Activated B cell treated with CpG ODN at 0.5 μM for 24 hours (primary cell): ENCODE measurements at regions of chr20 and their contacts with region 1.

Region 1: GRCh38 chr20:43955062-43955749 is 40.6 kb downstream of the TOX2 start:
- DNase-seq: peak; percentile 33
- ATAC-seq: peak; percentile 81
- H3K4me3 Mint-ChIP-seq: no peak overlapping the region
- H3K27ac Mint-ChIP-seq: peak overlapping the region; percentile 69
- H3K4me1 Mint-ChIP-seq: peaks cover 41% of the 10 kb centered on the region
- H3K27me3 Mint-ChIP-seq: no peaks in the 10 kb centered on the region
- CTCF ChIP-seq: no peak

Region 2: GRCh38 chr20:43840382-43841070 is 114.7 kb before region 1 on chr20:
- CTCF ChIA-PET with region 1: no interaction called
- POLR2A ChIA-PET with region 1: no interaction called
- intact Hi-C with region 1: loop called (anchors 5 kb)
- DNase-seq: no peak
- ATAC-seq: peak; percentile 82
- H3K4me3 Mint-ChIP-seq: no peak overlapping the region
- H3K27ac Mint-ChIP-seq: no peak overlapping the region
- H3K4me1 Mint-ChIP-seq: peaks cover 6% of the 10 kb centered on the region
- H3K27me3 Mint-ChIP-seq: no peaks in the 10 kb centered on the region
- CTCF ChIP-seq: no peak

Region 3: DNA sequence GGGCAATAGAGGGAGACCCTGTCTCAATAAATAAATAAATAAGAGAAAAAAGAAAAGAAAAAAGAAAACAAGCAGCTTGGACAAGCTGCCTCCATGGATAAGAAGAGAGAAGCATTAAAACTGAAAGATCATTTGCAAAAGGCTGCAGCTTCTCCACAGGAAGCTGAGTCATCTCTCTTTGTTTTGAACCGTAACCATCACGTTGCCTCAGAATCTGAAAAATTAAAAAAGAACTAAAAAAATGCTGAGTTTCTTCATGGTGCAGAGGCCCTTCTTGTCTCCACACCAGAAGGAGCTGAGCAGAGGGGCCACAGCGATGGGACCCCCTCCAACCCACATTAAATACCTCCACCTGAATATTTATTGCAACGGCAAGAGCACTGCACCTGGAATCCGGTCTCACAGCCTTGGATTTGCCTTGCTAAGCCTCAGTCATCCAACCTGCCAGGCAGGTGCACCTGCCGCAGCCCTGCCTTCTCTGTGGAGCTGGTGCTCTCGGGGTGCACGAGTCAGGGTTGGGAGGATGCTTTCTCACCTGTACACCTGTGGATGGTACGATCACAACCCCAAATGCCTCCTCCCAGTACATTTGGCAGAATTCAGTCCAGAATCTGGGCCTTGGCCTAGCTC is 12.4 kb before region 1 on chr20:
- CTCF ChIA-PET with region 1: no interaction called
- POLR2A ChIA-PET with region 1: interaction called, 9 read pairs
- intact Hi-C with region 1: loop called (anchors 1 kb)
- DNase-seq: no peak
- ATAC-seq: peak; percentile 63
- H3K4me3 Mint-ChIP-seq: peak overlapping the region; percentile 33
- H3K27ac Mint-ChIP-seq: peak overlapping the region; percentile 84
- H3K4me1 Mint-ChIP-seq: peaks cover 23% of the 10 kb centered on the region
- H3K27me3 Mint-ChIP-seq: no peaks in the 10 kb centered on the region
- CTCF ChIP-seq: no peak

Region 4: DNA sequence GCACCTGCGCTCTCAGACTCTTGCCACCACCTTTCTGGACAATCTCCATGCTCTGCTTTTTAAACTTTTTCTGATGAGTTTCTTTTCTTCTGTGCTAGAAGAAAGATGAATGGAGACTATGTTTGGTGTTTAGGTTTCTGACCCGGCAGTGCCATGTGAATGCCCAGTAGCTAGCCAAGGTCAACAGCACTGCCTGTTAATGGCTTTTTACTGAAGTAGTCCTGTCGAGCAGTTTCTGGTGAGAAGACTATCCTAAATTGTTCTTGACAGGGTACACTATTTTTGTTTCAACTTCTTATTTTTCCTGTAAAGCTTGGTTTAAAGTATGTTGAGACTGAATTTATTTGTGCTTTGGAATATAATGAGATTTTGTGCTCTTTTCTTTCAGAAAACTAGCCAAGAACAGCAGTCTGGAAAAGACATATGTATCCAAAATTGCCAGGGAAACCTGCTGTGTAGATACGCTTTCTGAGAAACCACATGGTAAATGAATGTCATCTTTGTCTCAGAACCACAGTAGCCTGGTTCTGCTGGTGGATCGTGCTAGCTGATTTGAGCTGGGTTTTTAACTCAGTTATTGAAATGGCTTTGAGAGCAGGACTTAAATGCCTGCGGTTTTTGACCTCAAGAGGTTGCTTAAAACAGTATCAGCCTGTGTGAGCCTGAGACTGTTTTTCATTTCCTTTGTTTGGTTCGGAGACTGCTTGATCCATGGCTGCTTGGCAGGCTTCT is 1097.7 kb after region 1 on chr20:
- CTCF ChIA-PET with region 1: no interaction called
- POLR2A ChIA-PET with region 1: no interaction called
- intact Hi-C with region 1: no loop called
- DNase-seq: no peak
- ATAC-seq: peak; percentile 26
- H3K4me3 Mint-ChIP-seq: no peak overlapping the region
- H3K27ac Mint-ChIP-seq: peak overlapping the region; percentile 89
- H3K4me1 Mint-ChIP-seq: peaks cover 80% of the 10 kb centered on the region
- H3K27me3 Mint-ChIP-seq: no peaks in the 10 kb centered on the region
- CTCF ChIP-seq: no peak